ENCODE measurements at regions of chr18 and their contacts with region 1.

Region 1: DNA sequence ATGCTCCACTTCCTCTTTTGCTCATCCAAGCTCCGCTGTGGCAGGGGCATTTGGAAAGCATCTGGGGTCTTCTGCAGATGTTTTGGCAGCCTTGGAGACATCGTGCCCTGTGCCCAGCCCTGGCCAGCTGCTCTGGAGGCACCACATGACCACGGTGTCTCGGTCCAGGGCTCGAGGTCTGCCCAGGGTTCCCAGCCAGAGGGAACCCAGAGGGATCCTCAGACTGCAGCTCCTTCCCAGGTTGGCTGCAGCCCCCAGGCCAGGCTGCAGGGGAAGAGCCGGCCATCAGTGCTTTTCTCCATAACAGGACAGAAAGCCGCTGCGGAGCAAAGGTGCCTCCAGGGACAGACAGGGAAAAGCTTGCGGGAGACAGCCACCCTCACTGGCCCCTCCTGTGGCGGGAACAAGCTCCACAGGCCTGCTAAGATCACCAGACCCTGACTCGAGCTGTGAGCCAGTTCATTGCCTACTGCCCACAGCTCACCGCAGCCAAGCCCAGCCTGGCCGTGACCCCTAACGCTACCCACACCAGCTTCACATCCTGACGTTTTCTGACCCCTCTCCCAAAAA is 74.7 kb downstream of the SMAD7 start:
- DNase-seq: peak in 2 of 3 donors; percentile 15 to 28
- ATAC-seq: no peak
- H3K4me3 ChIP-seq: no peak overlapping the region
- H3K27ac ChIP-seq: no peak overlapping the region
- H3K4me1 ChIP-seq: no peaks in the 10 kb centered on the region
- H3K27me3 ChIP-seq: no peaks in the 10 kb centered on the region
- CTCF ChIP-seq: no peak
- POLR2A ChIP-seq: no peak

Region 2: DNA sequence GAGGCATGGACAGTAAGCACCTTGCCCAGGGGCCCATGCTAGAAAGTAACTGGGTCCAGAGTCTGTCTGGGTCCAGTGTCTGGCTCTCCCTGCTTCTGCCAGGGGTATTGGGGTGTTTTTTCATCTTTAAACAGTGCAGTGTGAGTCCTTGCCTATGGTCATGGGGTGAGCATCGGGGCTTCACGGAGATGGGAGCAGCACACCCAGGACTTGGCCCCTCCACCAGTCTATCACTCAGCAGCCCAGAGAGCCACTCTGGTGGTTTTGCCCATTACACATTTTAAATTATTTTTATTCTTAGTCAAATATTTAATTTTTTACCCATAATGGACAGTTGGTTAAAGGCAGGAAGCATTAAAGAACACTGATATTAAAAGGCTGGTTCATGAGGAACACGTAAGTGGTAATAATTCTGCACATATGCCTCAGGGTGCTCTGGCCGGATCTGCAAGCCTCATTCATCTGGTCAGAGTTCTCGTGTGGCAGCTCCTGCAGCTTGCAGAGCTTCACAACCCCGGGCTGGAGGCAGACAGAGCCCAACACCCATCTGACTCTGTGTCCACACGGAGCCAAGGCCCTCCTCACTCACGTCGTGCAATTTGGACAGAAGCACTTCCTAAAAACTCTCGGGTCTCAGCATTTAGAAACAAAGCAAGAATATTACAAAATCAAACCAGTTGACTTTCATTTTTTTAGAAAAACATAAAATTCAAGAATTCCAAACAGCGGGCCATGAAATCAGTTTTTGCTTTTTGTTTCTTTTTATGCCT is 133.1 kb before region 1 on chr18:
- intact Hi-C with region 1: no loop called
- DNase-seq: peak in 1 of 3 donors; percentile 48
- ATAC-seq: peak; percentile 59 to 74 (median 71)
- H3K4me3 ChIP-seq: no peak overlapping the region
- H3K27ac ChIP-seq: no peak overlapping the region
- H3K4me1 ChIP-seq: no peaks in the 10 kb centered on the region
- H3K27me3 ChIP-seq: no peaks in the 10 kb centered on the region
- CTCF ChIP-seq: no peak
- POLR2A ChIP-seq: no peak

Region 3: GRCh38 chr18:48785091-48785614 is 90.9 kb before region 1 on chr18:
- intact Hi-C with region 1: no loop called
- DNase-seq: peak; percentile 29 to 56 (median 40)
- ATAC-seq: no peak
- H3K4me3 ChIP-seq: no peak overlapping the region
- H3K27ac ChIP-seq: no peak overlapping the region
- H3K4me1 ChIP-seq: peaks cover 0 to 42% (median 14%) of the 10 kb centered on the region in 4 donors
- H3K27me3 ChIP-seq: no peaks in the 10 kb centered on the region
- CTCF ChIP-seq: no peak
- POLR2A ChIP-seq: no peak

Region 4: GRCh38 chr18:48997985-48998831 is 122.2 kb after region 1 on chr18:
- intact Hi-C with region 1: loop called in 1 of 2 experiments (anchors 10 kb)
- DNase-seq: peak in 1 of 3 donors; percentile 38
- ATAC-seq: peak in 3 of 4 donors; percentile 17 to 67 (median 22)
- H3K4me3 ChIP-seq: no peak overlapping the region
- H3K27ac ChIP-seq: no peak overlapping the region
- H3K4me1 ChIP-seq: peaks cover 0 to 7% (median 0%) of the 10 kb centered on the region in 4 donors
- H3K27me3 ChIP-seq: no peaks in the 10 kb centered on the region
- CTCF ChIP-seq: no peak
- POLR2A ChIP-seq: no peak

Measured in right lobe of liver (tissue), 6 donors.